Activated T-helper 1 cell treated with anti-CD3 and anti-CD28 coated beads, Interleukin-12 subunit alpha, Interleukin-12 subunit beta, Interleukin-2, Interleukin-4 antibody, amounts not matched to agents 30 ng/mL and 10 ng/mL and 1 ng/mL, durations not matched to agents 14 hours and 24 hours and 36 hours (primary cell): ENCODE measurements at regions of chrX and their contacts with region 1.

Region 1: DNA sequence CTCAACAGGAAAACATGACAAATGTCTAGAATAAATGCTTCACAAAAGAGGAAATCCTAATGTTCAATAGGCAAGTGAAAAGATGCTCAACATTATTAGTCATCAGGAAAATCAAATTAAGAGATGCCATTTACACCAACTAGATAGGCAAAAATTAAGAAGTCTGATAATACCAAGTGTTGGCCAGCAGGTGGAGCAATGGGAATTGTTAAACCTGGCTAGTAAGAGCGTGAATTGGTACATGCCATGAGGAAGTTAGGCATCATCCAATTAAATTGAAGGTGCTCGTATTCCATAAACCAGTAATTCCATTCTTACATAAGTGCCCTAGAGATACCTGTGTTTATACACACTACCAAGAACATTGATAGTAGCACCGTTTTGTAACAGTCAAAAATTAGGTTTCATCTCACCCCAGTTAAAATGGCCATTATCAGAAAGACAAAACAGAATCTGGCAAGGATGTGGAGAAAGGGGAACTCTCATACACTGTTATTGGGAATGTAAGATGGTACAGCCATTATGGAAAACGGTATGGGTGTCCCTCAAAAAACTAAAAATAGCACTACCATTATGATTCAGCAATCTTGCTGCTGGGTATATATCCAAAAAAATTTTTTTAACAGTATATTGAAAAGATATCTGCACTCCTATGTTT is 14.0 kb upstream of the ZCCHC18 start:
- DNase-seq: peak; percentile 16
- H3K4me3 Mint-ChIP-seq: no peak overlapping the region
- H3K27ac Mint-ChIP-seq: no peak overlapping the region
- H3K4me1 Mint-ChIP-seq: no peaks in the 10 kb centered on the region
- H3K27me3 Mint-ChIP-seq: peaks cover 16% of the 10 kb centered on the region

Region 2: DNA sequence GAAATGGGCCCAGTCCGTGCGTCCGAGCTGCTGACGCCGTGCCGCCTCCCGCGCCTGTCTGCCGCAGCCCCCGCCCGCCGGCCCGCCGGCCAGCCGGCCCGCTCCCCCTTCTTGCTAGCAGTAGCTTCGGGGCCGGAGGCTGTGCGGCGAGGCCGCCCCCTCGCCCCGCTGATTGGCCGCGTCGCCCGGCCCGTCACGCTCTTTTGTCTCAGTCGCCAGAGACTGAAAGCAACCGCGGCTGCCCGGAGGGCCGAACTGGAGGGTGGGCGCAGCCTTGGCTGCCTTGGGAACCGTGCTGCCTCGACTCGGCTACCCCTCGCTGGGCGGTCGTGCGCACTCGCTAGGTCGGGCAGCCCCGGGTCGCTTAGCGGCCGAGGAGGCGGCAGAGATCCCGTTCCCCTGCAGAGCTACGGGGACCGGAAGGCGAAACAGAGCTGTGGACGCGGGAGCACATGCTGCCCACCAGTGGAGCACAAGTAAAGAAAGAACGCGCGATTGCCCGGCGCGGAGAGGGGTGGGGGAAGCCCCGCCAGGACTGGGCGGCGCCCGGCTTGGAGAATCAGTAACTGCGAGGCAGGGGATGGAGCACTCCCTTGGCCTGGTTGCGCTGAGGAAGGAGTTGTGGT is 14.2 kb after region 1 on chrX and contains the start of gene ZCCHC18:
- intact Hi-C with region 1: loop called (anchors 1 kb)
- DNase-seq: peak; percentile 5
- H3K4me3 Mint-ChIP-seq: peak within 1 kb of the TSS; percentile 83
- H3K27ac Mint-ChIP-seq: peak within 1 kb of the TSS; percentile 29
- H3K4me1 Mint-ChIP-seq: peaks cover 10% of the 10 kb centered on the region
- H3K27me3 Mint-ChIP-seq: peaks cover 8% of the 10 kb centered on the region
- total RNA-seq, gene ZCCHC18: 0.57 and 0.76 TPM in 2 replicates

Region 3: GRCh38 chrX:104136241-104137019 is 38.1 kb after region 1 on chrX:
- intact Hi-C with region 1: loop called (anchors 1 kb)
- DNase-seq: peak; percentile 11
- H3K4me3 Mint-ChIP-seq: no peak overlapping the region
- H3K27ac Mint-ChIP-seq: no peak overlapping the region
- H3K4me1 Mint-ChIP-seq: peaks cover 19% of the 10 kb centered on the region
- H3K27me3 Mint-ChIP-seq: no peaks in the 10 kb centered on the region